Right ventricle myocardium inferior (tissue), 1 donor: ENCODE measurements at regions of chr5 and their contacts with region 1.

Region 1: GRCh38 chr5:38373743-38374142 is 115.4 kb downstream of the EGFLAM start:
- DNase-seq: no peak
- ATAC-seq: no peak

Region 2: GRCh38 chr5:38265546-38266179 is 108.1 kb before region 1 on chr5:
- intact Hi-C with region 1: loop called (anchors 5 kb)
- DNase-seq: no peak
- ATAC-seq: peak; percentile 75

Region 3: DNA sequence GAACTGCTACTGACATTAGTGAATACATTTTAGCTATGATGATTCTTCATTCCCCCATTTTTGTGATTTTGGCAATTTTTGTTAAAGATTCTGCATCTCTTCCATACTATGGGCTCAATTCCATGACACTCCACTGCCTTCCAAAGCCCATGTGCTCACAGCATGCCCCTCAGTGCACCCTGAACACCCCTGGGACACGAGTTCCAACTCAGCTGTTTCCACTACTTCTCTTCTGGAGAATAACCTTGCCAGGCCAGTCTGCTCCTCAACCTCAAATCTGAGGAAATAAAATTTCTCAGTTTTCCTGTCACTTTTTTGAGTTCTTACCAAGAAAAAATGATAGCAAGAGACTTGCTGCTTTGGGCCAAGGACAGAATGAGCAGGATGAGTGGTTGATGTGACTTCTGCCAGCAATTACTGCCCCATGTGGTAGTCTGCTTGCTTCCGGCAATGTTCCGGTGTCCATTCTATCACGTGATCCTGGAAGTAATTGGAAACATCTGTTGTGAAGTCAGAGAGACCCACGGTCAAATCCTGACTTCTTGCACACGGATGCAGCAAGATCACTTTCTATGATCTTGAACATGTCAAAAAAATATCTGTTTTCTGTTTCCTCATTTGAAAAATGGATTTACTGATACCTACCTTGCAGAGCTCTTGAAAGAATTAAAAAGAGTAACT is 57.1 kb before region 1 on chr5:
- intact Hi-C with region 1: loop called (anchors 5 kb)
- DNase-seq: no peak
- ATAC-seq: peak; percentile 85